PC-9 (cell line): ENCODE measurements at regions of chr1 and their contacts with region 1.

Region 1: DNA sequence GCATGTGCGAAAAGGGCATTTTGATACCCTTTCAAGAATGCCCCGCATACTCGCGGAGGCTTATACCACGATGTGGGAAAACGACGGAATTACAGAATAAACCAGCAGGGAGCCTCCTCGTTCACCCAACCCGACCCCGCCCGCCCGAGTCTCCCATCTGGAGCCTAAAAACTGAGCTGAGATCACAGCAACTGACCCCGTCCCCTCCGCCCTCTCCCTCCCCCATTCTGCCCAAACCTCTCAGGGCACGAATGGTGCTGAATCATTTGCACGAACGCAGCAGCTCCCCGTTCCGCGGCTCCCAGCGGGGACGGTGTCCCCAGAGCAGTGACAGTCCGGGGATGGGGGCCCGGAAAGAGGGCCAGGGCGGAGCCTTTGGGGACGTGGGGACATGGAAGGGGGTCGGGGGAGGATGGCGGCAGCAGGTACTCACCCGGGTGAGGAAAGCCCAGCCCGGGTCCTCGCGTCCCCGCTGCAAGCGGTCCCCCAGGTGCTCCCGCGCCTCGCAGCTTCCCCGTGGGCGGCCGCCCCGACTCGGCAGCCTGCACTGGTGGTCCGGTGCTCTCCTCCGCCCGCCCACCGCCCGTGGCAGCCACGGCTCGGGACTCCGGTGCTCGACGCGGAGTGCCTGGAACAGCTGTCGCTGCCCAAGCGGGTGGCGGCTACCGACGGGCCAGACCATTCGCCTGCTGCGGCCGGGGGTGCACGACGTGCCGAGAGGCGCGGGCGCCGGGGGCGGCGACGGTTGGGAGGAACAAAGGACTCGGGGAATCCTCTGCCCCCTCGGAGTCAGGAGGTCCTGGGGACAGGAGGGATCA is at the start of gene TTLL7:
- DNase-seq: peak in 1 of 2 experiments; percentile 69
- H3K4me3 ChIP-seq: peak within 1 kb of the TSS; percentile 88
- H3K27ac ChIP-seq: peak within 1 kb of the TSS; percentile 31; the same call in 1 of the 2 replicates
- H3K4me1 ChIP-seq: peaks cover 5% of the 10 kb centered on the region
- H3K27me3 ChIP-seq: no peaks in the 10 kb centered on the region
- CTCF ChIP-seq: no peak
- total RNA-seq, gene TTLL7: 2.9 and 4.1 TPM in 2 replicates

Region 2: DNA sequence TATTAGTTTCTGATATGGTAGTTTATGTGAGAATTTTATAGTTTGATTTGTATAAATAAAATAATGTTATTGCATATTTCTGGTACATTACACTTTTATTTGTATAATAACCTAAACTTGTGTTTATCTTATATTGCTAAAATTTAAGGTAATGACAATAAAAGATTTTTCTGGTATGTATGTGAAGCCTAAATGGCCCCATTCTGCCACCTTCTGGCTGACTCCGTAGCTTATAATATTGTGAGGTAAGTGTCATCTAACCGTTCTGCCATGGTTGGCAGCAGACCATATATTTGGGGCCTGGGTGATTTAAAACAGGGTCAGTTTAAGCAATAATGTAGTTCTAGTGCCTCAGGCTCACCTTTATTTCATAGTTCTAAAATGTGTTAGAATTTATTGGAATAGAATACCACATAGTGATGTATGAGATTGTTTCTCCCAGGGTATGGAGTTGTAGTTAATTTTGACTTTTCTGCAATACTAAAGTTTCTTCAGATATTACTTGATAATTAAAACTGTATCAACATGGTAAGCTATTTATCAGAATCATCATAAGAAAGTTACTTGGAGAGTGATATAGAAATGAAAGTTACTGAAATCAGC is 124.2 kb after region 1 on chr1:
- CTCF ChIA-PET with region 1: no interaction called
- POLR2A ChIA-PET with region 1: no interaction called
- intact Hi-C with region 1: loop called (anchors 10 kb)
- DNase-seq: peak in 1 of 2 experiments; percentile 28
- H3K4me3 ChIP-seq: no peak overlapping the region
- H3K27ac ChIP-seq: no peak overlapping the region
- H3K4me1 ChIP-seq: no peaks in the 10 kb centered on the region
- H3K27me3 ChIP-seq: no peaks in the 10 kb centered on the region
- CTCF ChIP-seq: peak; percentile 87